Heart left ventricle (tissue), 16 donors: ENCODE measurements at regions of chr4 and their contacts with region 1.

Region 1: DNA sequence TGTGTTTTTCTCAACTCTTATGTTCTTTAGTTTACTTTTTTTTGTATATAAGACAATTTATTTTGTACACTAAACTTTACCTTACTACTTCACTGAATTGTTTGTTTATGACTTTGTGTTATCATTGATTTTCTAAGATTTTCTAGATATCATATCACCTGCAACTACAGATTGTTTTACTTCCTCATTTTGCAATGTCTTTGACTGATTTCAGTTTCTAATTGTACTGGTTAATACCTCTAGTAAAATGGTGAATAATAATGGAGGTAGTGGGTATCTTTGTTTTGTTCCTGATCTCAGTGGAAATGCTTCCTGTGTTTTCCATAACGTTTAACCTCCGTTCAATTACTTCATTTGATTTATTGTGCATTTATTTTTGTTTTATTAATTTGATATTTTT is 490.2 kb downstream of the TLL1 start:
- DNase-seq: no peak
- ATAC-seq: no peak
- H3K4me3 ChIP-seq: no peak overlapping the region
- H3K27ac ChIP-seq: no peak overlapping the region
- H3K4me1 ChIP-seq: no peaks in the 10 kb centered on the region
- H3K27me3 ChIP-seq: no peaks in the 10 kb centered on the region
- CTCF ChIP-seq: no peak
- POLR2A ChIP-seq: no peak

Region 2: DNA sequence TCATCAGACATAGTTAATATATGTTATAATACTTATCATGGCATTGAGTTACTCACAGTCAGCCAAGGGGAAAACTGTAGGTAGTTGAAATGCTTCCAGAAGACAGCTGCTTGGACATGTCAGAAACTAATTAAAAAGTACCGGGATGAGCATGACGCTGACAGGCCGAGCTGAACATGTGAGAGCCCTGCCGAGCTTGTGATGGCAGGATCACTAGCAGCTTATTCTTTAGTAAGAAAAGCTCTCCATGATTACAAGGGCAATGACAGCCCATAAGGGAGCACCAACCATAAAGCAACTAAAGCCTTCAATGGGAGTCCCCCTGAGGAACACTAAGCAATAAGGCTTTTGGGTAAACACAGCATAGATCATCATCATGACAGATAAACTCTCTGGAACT is 54.6 kb before region 1 on chr4:
- intact Hi-C with region 1: no loop called
- DNase-seq: no peak
- ATAC-seq: no peak
- H3K4me3 ChIP-seq: no peak overlapping the region
- H3K27ac ChIP-seq: no peak overlapping the region
- H3K4me1 ChIP-seq: no peaks in the 10 kb centered on the region
- H3K27me3 ChIP-seq: no peaks in the 10 kb centered on the region
- CTCF ChIP-seq: no peak
- POLR2A ChIP-seq: no peak

Region 3: DNA sequence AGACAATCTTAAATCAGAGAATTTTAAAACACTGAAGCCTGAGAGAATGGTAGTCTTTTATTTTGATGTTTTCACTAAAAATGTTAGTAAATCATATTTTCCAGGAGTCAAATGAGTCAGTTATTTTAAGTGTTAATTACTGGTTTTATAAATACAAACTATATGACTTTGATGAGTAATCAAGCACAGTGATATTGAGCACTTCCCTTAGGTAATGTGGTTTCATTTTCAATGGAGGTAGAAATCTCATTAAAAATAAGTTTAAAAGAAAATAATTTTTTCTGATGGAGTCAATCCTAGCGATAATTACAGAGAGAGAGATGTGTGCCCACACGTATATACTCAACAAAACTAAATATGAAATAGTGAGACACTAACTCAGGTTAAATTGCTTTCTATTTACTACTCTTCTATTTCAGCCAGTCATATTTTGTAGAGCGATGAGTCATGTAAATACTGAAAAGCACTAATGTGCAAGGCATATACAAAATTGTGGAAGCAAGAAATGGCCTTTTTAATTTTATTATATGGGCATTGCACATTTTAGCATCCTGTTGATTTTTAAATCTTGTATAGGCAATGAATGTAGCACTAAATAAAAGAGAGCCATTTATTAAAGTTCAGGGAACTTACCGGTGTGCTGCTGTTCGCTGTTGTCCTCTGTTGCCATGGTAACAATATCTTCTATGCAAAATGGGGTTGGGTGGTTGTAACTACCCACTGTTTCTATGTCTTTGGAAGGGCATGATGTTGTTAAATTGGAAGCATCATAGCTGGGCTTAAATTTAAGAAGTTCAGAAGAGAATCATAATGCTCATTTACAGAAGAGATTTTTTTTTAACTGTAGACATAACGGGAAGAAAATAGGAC is 23.5 kb after region 1 on chr4:
- intact Hi-C with region 1: loop called in 1 of 10 experiments (anchors 2 kb)
- DNase-seq: no peak
- ATAC-seq: no peak
- H3K4me3 ChIP-seq: no peak overlapping the region
- H3K27ac ChIP-seq: no peak overlapping the region
- H3K4me1 ChIP-seq: no peaks in the 10 kb centered on the region
- H3K27me3 ChIP-seq: no peaks in the 10 kb centered on the region
- CTCF ChIP-seq: no peak
- POLR2A ChIP-seq: no peak